ENCODE measurements at regions of chr13 and their contacts with region 1.

Region 1: DNA sequence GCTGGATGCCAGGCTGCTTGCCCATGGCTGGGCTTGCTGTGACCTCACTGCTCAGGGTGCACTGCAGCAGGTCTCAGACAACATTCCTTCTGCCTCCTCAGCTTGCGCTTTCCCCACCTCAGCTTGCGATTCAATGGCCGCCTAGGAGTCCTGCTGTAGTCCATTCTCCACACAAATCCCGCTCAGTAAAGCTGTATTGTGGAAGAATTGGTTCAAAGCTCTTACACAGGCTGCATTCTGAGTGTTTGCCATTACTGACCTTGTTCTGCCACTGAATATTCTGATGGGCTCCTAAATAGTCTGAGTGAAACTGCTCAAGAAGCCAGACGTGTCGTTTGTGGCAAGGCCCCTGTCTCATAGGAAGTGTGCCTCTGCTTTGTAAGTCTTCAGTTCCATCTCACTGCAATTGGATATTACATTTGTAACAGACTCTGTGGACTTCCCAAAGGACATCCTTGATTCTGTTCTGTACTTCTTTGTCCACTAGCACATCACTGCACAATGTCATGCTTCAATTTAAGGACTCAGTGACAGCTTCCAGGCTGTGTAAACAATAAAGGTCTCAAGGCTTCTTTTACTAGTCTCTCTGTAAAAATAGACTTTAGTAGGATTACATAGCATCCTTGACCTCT is 49.8 kb downstream of the KATNAL1 start:
- DNase-seq: no peak
- H3K4me3 Mint-ChIP-seq: no peak overlapping the region
- H3K27ac Mint-ChIP-seq: no peak overlapping the region
- H3K4me1 Mint-ChIP-seq: peaks cover 25% of the 10 kb centered on the region
- H3K27me3 Mint-ChIP-seq: no peaks in the 10 kb centered on the region

Region 2: DNA sequence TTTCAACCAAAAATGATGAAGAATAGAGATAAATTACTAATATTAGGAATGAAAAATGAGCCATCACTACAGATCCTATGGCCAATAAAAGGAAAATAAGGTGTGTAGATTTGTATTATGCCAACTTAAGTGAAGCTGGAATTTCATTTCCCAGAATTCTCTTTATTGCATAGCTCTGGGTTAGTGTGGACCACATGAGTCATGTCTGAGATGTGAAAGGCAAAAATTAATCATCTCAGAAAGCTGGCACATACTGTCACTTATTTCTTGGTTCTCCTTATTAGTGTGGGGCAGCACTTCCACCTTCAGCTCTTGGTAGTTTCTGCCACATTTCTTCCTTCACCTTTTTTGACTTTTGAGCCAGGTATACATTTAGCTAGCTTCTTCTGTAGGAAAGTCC is 32.9 kb before region 1 on chr13:
- CTCF ChIA-PET with region 1: interaction called, 7 read pairs
- POLR2A ChIA-PET with region 1: interaction called, 5 read pairs
- intact Hi-C with region 1: loop called (anchors 1 kb)
- DNase-seq: no peak
- H3K4me3 Mint-ChIP-seq: no peak overlapping the region
- H3K27ac Mint-ChIP-seq: peak overlapping the region; percentile 46
- H3K4me1 Mint-ChIP-seq: peaks cover 17% of the 10 kb centered on the region
- H3K27me3 Mint-ChIP-seq: no peaks in the 10 kb centered on the region

Region 3: DNA sequence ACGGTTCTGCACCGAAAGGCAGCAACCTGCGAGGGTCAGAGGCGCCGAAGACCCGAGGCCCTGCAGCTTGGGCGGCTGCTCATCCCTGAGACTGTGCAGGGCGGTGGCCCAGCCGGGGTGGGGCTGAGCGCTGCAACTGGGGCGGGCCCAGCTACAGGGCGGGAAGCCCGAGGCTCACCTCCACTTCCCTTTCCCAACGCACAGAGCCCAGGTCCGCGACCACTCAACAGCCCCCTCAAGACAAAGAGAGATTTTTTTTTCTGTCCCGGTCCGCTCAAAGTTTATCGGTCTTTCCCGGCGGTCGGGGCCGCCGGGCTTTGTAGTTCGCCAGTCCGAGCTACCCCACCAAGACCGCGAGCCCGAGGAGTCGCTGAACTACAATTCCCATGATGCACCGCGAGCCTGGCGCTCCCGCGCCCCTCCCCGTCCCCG is 49.2 kb after region 1 on chr13:
- CTCF ChIA-PET with region 1: interaction called, 3 read pairs
- POLR2A ChIA-PET with region 1: no interaction called
- intact Hi-C with region 1: loop called (anchors 1 kb)
- DNase-seq: peak; percentile 94
- H3K4me3 Mint-ChIP-seq: peak overlapping the region; percentile 84
- H3K27ac Mint-ChIP-seq: peak overlapping the region; percentile 87
- H3K4me1 Mint-ChIP-seq: peaks cover 49% of the 10 kb centered on the region
- H3K27me3 Mint-ChIP-seq: no peaks in the 10 kb centered on the region

Region 4: GRCh38 chr13:30457306-30457891 is 199.8 kb after region 1 on chr13:
- CTCF ChIA-PET with region 1: no interaction called
- POLR2A ChIA-PET with region 1: no interaction called
- intact Hi-C with region 1: loop called (anchors 5 kb)
- DNase-seq: no peak
- H3K4me3 Mint-ChIP-seq: no peak overlapping the region
- H3K27ac Mint-ChIP-seq: no peak overlapping the region
- H3K4me1 Mint-ChIP-seq: peaks cover 28% of the 10 kb centered on the region
- H3K27me3 Mint-ChIP-seq: no peaks in the 10 kb centered on the region

Region 5: DNA sequence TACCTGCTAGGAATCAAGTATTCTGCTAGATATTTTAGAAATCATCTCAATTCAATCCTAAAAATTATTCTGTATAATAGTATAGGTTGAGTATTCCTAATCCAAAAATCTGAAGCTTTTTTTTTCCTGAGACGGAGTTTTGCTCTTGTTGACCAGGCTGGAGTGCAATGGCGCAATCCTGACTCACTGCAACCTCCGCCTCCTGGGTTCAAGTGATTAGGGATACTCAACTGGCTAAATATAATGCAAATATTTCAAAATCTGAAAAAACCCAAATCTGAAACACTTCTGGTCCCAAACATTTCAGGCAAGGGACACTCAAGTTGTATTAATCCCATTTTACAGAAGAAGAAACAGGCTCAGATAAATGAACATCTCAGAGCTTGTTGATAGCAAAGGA is 342.9 kb after region 1 on chr13:
- CTCF ChIA-PET with region 1: no interaction called
- POLR2A ChIA-PET with region 1: no interaction called
- intact Hi-C with region 1: no loop called
- DNase-seq: no peak
- H3K4me3 Mint-ChIP-seq: no peak overlapping the region
- H3K27ac Mint-ChIP-seq: no peak overlapping the region
- H3K4me1 Mint-ChIP-seq: no peaks in the 10 kb centered on the region
- H3K27me3 Mint-ChIP-seq: no peaks in the 10 kb centered on the region

Measured in activated CD4-positive, alpha-beta memory T cell treated with anti-CD3 and anti-CD28 coated beads for 36 hours (primary cell).